Head of caudate nucleus (tissue), 42 donors: ENCODE measurements at regions of chr1 and their contacts with region 1.

Region 1: GRCh38 chr1:110460253-110461220 is 9.6 kb downstream of the PROK1 start:
- DNase-seq: peak in 41 of 42 donors; percentile 50 to 93 (median 83)

Region 2: DNA sequence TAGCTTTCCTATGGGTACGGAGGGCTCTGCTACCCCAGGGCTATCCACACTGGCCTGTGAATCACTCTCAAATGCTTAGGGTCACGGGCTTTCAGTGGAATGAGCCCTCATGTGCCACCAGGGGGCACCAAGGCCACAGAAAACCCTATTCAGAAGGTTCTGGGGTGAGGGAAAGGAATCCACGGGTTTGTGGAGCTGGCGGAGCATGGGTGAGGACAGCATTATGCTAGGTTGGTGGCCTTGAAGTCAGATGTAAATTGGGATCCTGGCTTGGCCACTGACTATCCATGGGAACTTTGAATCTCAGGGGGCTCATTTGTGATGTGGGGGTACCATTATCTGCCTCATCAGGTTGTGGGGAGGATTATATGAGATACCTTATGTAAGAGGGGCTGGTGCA is 48.0 kb before region 1 on chr1:
- intact Hi-C with region 1: loop called (anchors 2 kb)
- DNase-seq: peak; percentile 38 to 86 (median 74)